ENCODE measurements at regions of chr5 and their contacts with region 1.

Region 1: GRCh38 chr5:100623719-100624118 is 88.5 kb downstream of the FAM174A start:
- DNase-seq: peak; percentile 51
- H3K4me3 Mint-ChIP-seq: no peak overlapping the region
- H3K27ac Mint-ChIP-seq: no peak overlapping the region
- H3K4me1 Mint-ChIP-seq: no peaks in the 10 kb centered on the region
- H3K27me3 Mint-ChIP-seq: no peaks in the 10 kb centered on the region
- CTCF ChIP-seq: peak; percentile 65

Region 2: GRCh38 chr5:100273846-100274580 is 349.7 kb before region 1 on chr5:
- CTCF ChIA-PET with region 1: no interaction called
- POLR2A ChIA-PET with region 1: no interaction called
- intact Hi-C with region 1: no loop called
- DNase-seq: no peak
- H3K4me3 Mint-ChIP-seq: no peak overlapping the region
- H3K27ac Mint-ChIP-seq: no peak overlapping the region
- H3K4me1 Mint-ChIP-seq: peaks cover 7% of the 10 kb centered on the region
- H3K27me3 Mint-ChIP-seq: peaks cover 10% of the 10 kb centered on the region
- CTCF ChIP-seq: no peak

Region 3: DNA sequence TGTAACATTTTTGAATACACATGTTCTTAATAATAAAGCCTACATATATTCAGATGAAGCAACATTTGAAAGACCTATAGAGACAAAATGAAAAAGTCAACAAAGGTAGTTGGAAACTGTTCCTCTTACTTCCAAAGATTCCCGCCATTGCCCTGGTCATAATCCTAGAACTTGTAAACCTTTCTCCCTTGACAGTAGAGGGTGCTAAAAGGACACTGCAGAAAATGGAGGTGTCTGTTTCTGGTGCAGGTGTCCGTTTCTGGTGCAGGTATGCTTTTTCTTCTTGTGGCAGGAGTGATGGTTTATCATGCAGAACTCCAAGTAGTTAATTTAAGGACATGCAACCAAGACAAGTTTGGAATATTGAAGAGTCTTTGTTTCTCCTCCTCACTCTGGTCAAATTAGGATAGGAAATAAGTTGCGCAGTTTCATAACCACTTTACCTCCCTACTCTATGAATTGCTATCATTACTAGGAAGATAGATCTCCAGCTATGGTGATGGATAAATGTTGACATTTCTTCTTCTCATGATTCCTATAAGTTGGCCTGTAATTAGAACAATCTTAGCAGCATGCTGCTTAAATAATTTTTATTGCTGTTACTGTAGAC is 144.5 kb before region 1 on chr5:
- CTCF ChIA-PET with region 1: no interaction called
- POLR2A ChIA-PET with region 1: no interaction called
- intact Hi-C with region 1: loop called (anchors 1 kb)
- DNase-seq: peak; percentile 76
- H3K4me3 Mint-ChIP-seq: no peak overlapping the region
- H3K27ac Mint-ChIP-seq: no peak overlapping the region
- H3K4me1 Mint-ChIP-seq: no peaks in the 10 kb centered on the region
- H3K27me3 Mint-ChIP-seq: no peaks in the 10 kb centered on the region
- CTCF ChIP-seq: peak; percentile 74

Region 4: GRCh38 chr5:100676817-100677684 is 53.3 kb after region 1 on chr5:
- CTCF ChIA-PET with region 1: no interaction called
- POLR2A ChIA-PET with region 1: no interaction called
- intact Hi-C with region 1: no loop called
- DNase-seq: peak; percentile 32
- H3K4me3 Mint-ChIP-seq: no peak overlapping the region
- H3K27ac Mint-ChIP-seq: no peak overlapping the region
- H3K4me1 Mint-ChIP-seq: peaks cover 15% of the 10 kb centered on the region
- H3K27me3 Mint-ChIP-seq: no peaks in the 10 kb centered on the region
- CTCF ChIP-seq: no peak

Region 5: GRCh38 chr5:100903039-100903887 is 279.5 kb after region 1 on chr5 and contains the start of gene ST8SIA4:
- CTCF ChIA-PET with region 1: no interaction called
- POLR2A ChIA-PET with region 1: no interaction called
- intact Hi-C with region 1: loop called (anchors 2 kb)
- DNase-seq: peak; percentile 79
- H3K4me3 Mint-ChIP-seq: peak within 1 kb of the TSS; percentile 61
- H3K27ac Mint-ChIP-seq: no peak within 1 kb of the TSS
- H3K4me1 Mint-ChIP-seq: peaks cover 16% of the 10 kb centered on the region
- H3K27me3 Mint-ChIP-seq: no peaks in the 10 kb centered on the region
- CTCF ChIP-seq: no peak
- total RNA-seq, gene ST8SIA4: 0.26 and 0.54 TPM in 2 replicates

Region 6: GRCh38 chr5:101390151-101390908 is 766.6 kb after region 1 on chr5:
- CTCF ChIA-PET with region 1: interaction called, 3 read pairs
- POLR2A ChIA-PET with region 1: no interaction called
- intact Hi-C with region 1: loop called (anchors 1 kb)
- DNase-seq: peak; percentile 58
- H3K4me3 Mint-ChIP-seq: no peak overlapping the region
- H3K27ac Mint-ChIP-seq: no peak overlapping the region
- H3K4me1 Mint-ChIP-seq: no peaks in the 10 kb centered on the region
- H3K27me3 Mint-ChIP-seq: peaks cover 11% of the 10 kb centered on the region
- CTCF ChIP-seq: peak; percentile 60